PC-3 (cell line): ENCODE measurements at regions of chr12 and their contacts with region 1.

Region 1: GRCh38 chr12:102484428-102484958 is 4.1 kb upstream of the IGF1 start:
- DNase-seq: peak; percentile 68
- ATAC-seq: peak; percentile 49; the same call in 1 of the 2 replicates
- H3K4me3 ChIP-seq: peak overlapping the region; percentile 52
- H3K27ac ChIP-seq: no peak overlapping the region
- H3K4me1 ChIP-seq: no peaks in the 10 kb centered on the region
- H3K27me3 ChIP-seq: 0 out of 2 replicates have a peak, but pooled peaks cover 2% of the 10 kb centered on the region
- CTCF ChIP-seq: peak; percentile 96

Region 2: DNA sequence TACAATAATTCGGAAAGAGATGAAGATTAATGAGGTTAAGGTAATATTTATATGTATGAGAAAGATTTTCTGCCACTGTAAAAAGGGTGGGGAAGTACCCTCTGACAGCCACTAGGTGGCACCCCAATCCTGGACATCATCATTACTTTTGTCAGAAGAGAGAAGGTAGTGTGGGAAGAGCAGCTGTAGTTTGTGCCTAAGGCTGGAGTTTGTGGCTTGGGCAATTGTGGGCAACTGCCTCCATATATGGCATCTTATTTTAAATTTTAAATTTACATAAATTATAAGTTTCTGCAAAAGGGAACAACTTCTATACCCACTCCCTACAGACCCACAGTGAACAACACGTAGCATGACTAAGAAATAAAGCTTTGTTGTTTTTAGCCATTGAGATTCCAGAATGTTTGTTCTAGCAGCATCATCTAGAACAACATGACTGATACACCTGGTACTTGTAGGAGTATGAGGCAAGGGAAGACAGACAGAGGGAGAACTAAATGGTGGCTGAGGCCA is 710.8 kb before region 1 on chr12:
- CTCF ChIA-PET with region 1: no interaction called
- POLR2A ChIA-PET with region 1: no interaction called
- intact Hi-C with region 1: loop called (anchors 10 kb)
- DNase-seq: peak; percentile 81
- ATAC-seq: peak; percentile 84
- H3K4me3 ChIP-seq: no peak overlapping the region
- H3K27ac ChIP-seq: no peak overlapping the region
- H3K4me1 ChIP-seq: no peaks in the 10 kb centered on the region
- H3K27me3 ChIP-seq: no peaks in the 10 kb centered on the region
- CTCF ChIP-seq: peak; percentile 95

Region 3: DNA sequence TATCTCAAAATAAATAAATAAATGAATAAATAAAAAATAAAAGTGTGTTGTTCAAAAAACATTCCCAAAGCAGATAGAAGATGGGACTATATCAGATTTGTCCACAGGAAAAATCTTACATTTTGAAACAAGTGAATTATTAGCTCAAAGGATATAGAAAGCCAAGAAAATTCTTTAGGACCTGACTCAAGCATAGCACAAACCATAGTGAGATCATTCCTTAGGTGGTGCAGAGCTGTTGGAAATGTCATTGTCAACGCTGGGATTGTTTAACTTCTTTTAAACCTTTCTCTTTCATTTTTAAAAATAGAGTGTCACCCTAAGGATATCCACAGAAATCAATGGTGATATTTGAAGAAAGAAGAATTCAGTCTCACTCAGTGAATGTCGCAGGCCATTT is 563.6 kb before region 1 on chr12:
- CTCF ChIA-PET with region 1: no interaction called
- POLR2A ChIA-PET with region 1: no interaction called
- intact Hi-C with region 1: loop called (anchors 1 kb)
- DNase-seq: no peak
- ATAC-seq: no peak
- H3K4me3 ChIP-seq: no peak overlapping the region
- H3K27ac ChIP-seq: no peak overlapping the region
- H3K4me1 ChIP-seq: peaks cover 11% of the 10 kb centered on the region
- H3K27me3 ChIP-seq: no peaks in the 10 kb centered on the region
- CTCF ChIP-seq: no peak

Region 4: DNA sequence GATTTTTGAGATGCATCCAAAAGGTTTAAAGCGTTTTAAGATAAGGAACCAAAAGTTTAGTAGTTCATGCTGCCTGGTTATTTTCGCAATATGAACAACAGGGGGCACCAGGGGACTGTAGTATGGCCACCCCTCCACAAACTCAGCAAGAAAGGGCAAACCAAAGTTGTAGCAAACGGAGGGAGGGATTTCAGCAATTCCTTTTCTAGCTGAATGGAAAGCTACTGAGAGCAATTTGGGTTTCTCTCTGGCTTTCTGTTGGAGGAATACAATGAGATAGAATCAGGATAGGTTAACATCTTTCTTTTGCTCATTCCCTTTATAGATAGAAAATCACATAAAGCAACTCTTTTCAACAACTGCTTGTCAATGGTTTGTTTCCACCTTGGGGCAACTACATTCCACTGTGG is 544.6 kb before region 1 on chr12:
- CTCF ChIA-PET with region 1: interaction called, 6 read pairs
- POLR2A ChIA-PET with region 1: no interaction called
- intact Hi-C with region 1: loop called (anchors 1 kb)
- DNase-seq: peak; percentile 77
- ATAC-seq: peak; percentile 78
- H3K4me3 ChIP-seq: no peak overlapping the region
- H3K27ac ChIP-seq: no peak overlapping the region
- H3K4me1 ChIP-seq: no peaks in the 10 kb centered on the region
- H3K27me3 ChIP-seq: peaks cover 22% of the 10 kb centered on the region
- CTCF ChIP-seq: peak; percentile 93

Region 5: DNA sequence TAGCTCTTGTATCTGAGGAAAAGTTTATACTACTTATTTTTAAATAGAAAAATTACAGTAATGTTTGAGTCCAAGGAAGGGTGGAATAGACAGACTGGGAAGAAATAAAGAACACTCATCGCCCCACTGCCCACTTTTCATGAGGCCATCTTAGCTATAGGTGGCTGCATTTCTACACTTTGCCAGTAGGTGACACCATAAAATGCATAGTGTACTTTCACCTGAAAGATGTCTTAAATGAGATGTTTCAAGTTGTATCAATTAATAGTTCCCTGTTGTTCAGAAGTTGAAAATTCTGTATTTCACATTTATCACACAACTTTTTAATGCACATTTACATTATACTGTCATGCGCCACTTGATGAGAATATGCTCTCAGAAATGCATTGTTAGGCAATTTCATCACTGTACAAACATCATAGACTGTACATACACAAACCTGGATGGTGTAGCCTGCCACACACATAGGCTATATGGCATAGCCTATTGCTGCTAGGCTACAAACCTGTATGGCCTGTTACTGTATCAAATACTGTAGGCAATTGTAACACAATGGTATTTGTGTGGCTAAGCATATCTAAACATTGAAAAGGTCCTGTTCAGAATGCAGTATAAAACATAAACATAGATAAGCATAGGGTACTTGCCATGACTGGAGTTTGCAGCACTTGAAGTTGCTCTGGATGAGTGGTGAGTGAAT is 314.4 kb before region 1 on chr12:
- CTCF ChIA-PET with region 1: no interaction called
- POLR2A ChIA-PET with region 1: no interaction called
- intact Hi-C with region 1: loop called (anchors 1 kb)
- DNase-seq: peak; percentile 60
- ATAC-seq: peak; percentile 48; the same call in 1 of the 2 replicates
- H3K4me3 ChIP-seq: no peak overlapping the region
- H3K27ac ChIP-seq: no peak overlapping the region
- H3K4me1 ChIP-seq: no peaks in the 10 kb centered on the region
- H3K27me3 ChIP-seq: no peaks in the 10 kb centered on the region
- CTCF ChIP-seq: peak; percentile 83

Region 6: DNA sequence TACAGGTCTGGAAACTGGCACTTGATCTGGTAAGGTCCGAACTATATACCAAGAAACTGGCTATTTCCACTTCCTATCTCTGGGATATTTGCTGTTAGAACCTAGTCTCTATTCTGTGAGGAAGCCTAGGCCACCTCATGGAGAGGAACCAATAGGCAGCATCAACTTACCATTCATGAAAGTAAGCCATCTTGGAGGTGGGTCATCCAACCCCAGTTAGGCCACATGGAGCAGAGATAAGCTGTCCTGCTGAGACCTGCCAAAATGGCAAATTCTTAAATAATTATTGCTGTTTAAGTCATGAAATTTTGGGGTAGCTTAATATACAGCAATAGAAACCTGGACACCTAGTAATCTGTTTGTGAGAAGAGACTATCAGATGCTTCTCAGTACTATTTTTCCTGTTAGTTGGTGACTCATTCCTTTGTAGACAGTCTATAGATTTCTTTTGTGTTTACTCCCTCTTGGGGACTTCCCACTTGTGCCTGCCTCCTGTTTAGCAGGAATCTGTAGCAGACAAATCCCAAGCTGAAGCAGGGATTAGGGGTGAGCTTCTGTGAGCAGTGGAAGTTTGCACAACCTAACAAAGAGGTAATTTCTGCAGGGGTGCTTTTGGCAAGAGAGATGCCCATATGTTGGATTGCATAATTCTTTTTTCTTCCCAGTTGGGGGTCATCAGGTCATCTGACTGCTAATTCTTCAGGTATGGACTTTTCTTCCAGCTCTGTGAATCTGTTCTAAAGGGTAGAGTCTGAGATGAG is 141.0 kb before region 1 on chr12:
- CTCF ChIA-PET with region 1: no interaction called
- POLR2A ChIA-PET with region 1: no interaction called
- intact Hi-C with region 1: no loop called
- DNase-seq: no peak
- ATAC-seq: no peak
- H3K4me3 ChIP-seq: no peak overlapping the region
- H3K27ac ChIP-seq: no peak overlapping the region
- H3K4me1 ChIP-seq: no peaks in the 10 kb centered on the region
- H3K27me3 ChIP-seq: no peaks in the 10 kb centered on the region
- CTCF ChIP-seq: no peak